Pancreas (tissue), 10 donors: ENCODE measurements at regions of chr10 and their contacts with region 1.

Region 1: DNA sequence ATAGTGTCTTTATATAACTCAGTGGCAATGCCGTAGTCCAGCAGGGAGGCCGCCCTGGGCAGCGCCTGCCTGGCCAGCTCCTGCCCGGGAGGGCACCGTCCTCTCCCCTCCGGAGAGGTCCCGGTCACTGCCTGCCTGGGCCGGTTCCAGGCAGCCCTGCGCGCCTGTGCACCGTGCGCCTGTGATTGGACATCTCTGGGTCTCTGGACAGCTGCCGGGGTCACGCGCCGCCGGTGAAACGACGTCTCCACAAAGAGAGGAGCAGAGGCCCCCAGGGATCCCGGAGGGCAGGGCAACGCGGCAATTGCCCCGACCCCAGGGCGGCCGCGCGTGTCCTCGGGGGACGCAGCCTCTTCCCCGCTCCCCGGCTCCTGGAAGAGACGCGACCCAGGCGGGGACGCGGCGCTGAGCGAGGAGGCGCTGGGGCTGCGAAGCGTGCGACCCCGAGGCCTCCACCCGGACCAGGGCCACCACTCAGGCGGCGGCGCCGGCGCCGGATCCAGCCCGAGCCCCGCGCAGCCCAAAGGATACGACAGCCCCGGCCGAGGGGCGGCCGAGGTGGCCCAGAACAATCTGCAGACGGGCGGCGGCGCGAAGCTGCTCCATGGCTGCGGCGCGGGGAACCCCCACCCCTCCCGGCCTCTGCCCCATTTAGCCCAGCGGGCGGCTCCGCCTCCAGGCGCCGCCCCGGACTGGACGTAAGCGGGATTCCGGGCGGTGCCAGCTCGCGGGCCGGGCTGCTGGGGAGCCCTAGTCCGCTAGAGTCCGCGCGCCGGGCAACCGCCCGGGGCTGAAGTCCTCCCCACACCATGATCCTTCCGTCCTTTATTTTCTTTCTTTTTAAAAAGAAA is at the start of gene PHYH:
- DNase-seq: peak; percentile 87 to 97 (median 92)
- ATAC-seq: peak; percentile 86 to 92 (median 90)
- H3K4me3 ChIP-seq: peak within 1 kb of the TSS; percentile 52 to 98 (median 88)
- H3K27ac ChIP-seq: peak within 1 kb of the TSS; percentile 88 to 100 (median 99)
- H3K4me1 ChIP-seq: peaks cover 0 to 4% (median 4%) of the 10 kb centered on the region in 3 donors
- H3K27me3 ChIP-seq: no peaks in the 10 kb centered on the region
- CTCF ChIP-seq: no peak
- total RNA-seq, gene PHYH: 13.4 to 22.5 (median 18.3) TPM

Region 2: DNA sequence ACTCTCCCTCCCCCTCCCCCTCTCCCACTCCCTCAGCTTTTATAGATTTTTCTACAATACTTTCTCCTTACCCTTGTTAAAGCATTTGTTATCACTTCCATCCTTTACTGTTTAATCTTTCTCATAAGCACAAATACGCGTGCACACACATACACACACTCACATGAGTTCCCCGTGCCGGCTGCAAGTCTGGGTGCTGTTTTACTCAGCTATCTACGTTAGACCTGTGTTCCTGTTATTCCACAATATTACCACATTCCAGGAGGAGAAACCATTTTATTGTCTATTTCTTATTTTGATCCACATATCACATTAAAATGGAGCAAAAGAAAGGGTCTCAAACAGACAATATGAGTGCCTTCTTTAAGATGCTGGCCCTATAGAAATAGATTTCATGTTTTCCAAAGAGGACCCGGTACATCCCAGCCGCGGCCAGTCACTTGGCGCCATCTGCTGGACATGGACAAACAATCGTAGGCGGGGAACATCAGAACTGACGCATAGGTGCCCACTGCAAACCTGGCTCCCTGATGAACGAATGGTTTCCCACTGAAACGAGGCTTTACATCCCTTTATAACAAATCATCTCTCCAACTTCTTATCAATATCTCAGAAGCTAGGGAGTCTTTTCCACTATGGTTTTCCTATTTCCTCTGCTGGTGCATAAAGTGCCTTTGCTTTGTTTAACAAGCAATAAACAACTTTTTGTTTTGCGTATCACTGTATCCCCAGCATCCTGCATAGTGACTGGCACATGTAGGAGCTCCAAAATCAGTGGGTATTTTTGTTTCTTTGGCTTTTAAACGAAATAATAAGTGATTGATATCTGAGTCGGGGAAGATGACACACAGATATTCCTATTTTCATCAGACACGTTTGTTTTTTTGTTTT is 224.9 kb before region 1 on chr10:
- intact Hi-C with region 1: no loop called
- DNase-seq: peak; percentile 30 to 80 (median 66)
- ATAC-seq: peak; percentile 83 to 93 (median 90)
- H3K4me3 ChIP-seq: no peak overlapping the region
- H3K27ac ChIP-seq: no peak overlapping the region
- H3K4me1 ChIP-seq: no peaks in the 10 kb centered on the region
- H3K27me3 ChIP-seq: no peaks in the 10 kb centered on the region
- CTCF ChIP-seq: peak; percentile 51 to 77 (median 69)

Region 3: DNA sequence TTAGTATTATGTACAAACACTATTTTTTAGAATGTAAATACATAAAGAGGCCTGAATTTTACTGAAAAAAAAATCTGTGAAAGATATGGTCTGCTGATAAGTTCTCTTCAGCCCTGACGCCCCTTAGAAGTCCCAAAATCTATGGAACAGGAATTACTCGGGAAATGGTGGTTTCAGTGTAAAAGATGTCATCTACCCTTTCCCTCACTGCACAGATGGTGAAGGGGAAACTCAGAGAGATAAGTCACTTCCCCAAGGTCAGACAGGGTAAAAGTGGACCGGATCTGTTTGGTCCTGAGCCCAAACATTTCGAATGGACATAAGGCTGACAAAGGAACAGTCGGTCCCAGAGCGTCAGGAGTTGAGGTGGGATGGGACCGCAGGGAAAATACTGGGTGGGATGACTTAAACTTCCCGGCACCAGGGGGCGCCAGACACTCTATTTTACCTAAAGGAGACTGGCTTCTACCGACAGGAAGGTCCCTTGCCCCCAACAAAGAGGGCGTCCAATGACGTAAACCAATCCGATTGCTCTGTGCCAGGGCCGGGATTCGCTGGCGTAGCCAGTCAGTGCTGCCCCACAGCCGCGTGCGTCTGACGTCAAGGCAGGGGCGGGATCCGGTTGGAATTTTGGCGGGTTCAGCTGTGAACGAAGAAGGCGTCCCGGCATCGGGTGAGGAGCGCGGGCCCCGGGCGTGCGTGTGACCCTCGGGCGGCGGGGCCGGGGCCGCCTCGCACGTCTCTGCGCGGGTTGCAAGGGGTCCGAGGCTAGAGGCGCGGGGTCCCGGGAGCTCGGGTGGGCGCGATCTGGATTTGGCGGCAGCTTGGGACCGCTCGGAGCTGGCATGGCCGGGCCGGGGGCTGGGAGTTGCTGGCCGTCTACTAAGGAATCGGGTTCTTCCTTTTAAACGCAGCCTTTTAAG is 138.5 kb before region 1 on chr10 and contains the start of gene MCM10:
- intact Hi-C with region 1: loop called in 1 of 3 experiments (anchors 5 kb)
- DNase-seq: peak; percentile 97 to 99 (median 98)
- ATAC-seq: peak; percentile 100
- H3K4me3 ChIP-seq: peak within 1 kb of the TSS; percentile 2 to 60 (median 36)
- H3K27ac ChIP-seq: no peak within 1 kb of the TSS
- H3K4me1 ChIP-seq: peaks cover 0 to 3% (median 3%) of the 10 kb centered on the region in 3 donors
- H3K27me3 ChIP-seq: no peaks in the 10 kb centered on the region
- CTCF ChIP-seq: peak; percentile 83 to 87 (median 84)
- total RNA-seq, gene MCM10: 0.12 to 0.35 (median 0.32) TPM in 5 of 6 donors, not detected in the other